Mammary epithelial cell (primary cell): ENCODE measurements at regions of chr1 and their contacts with region 1.

Region 1: DNA sequence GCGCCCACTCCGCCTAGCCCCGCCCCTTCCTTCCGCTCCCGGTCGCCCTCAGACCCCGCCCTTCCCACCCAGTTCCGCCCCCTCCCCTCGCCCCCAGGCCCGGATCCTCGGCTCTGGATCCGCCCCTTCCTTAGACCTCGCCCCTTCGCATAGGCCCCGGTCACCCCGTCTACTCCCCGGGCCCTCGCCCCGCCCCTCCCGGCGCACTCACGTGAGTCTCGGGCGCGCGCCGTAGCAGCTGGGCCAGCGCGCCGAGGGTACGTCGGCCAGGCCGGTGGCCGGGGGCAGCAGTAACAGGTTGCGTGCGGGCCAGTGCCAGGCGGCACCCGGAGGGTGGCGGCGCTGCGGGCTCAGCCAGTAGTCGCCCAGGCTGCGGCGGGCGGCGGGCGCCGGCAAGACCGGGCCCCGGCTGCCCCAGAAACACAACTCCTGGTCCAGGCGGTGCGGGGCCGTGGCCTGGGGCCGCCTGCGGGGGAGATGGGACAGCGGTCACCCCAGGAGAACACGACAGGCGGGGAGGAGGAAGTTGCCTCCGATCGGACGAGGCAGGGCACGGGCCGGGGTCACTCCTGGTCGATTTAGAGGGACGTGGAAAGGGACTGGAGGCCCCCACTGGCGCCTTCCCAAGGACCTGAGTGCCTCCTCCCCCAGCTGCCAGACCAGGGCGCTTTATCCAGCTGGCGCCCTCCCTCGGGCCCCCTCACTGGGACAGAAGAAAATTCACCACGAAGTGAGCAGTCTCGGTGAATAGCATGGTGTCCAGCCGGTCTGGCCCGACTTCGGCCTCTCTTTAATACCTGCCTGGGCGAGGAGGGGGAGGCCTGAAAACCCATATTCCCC is 10.7 kb downstream of the FAM229A start:
- DNase-seq: peak; percentile 73
- H3K4me3 ChIP-seq: peak overlapping the region; percentile 45 to 78 (median 58)
- H3K27ac ChIP-seq: peak overlapping the region; percentile 22
- H3K4me1 ChIP-seq: peaks cover 20% of the 10 kb centered on the region
- H3K27me3 ChIP-seq: no peaks in the 10 kb centered on the region
- CTCF ChIP-seq: no peak

Region 2: GRCh38 chr1:32063261-32063681 is 288.3 kb before region 1 on chr1:
- CTCF ChIA-PET with region 1: no interaction called
- dilution Hi-C with region 1: no loop called
- in situ Hi-C with region 1: no loop called
- intact Hi-C with region 1: no loop called
- DNase-seq: peak; percentile 38
- H3K4me3 ChIP-seq: no peak overlapping the region
- H3K27ac ChIP-seq: no peak overlapping the region
- H3K4me1 ChIP-seq: peaks cover 23% of the 10 kb centered on the region
- H3K27me3 ChIP-seq: no peaks in the 10 kb centered on the region
- CTCF ChIP-seq: peak; percentile 54 to 59

Region 3: DNA sequence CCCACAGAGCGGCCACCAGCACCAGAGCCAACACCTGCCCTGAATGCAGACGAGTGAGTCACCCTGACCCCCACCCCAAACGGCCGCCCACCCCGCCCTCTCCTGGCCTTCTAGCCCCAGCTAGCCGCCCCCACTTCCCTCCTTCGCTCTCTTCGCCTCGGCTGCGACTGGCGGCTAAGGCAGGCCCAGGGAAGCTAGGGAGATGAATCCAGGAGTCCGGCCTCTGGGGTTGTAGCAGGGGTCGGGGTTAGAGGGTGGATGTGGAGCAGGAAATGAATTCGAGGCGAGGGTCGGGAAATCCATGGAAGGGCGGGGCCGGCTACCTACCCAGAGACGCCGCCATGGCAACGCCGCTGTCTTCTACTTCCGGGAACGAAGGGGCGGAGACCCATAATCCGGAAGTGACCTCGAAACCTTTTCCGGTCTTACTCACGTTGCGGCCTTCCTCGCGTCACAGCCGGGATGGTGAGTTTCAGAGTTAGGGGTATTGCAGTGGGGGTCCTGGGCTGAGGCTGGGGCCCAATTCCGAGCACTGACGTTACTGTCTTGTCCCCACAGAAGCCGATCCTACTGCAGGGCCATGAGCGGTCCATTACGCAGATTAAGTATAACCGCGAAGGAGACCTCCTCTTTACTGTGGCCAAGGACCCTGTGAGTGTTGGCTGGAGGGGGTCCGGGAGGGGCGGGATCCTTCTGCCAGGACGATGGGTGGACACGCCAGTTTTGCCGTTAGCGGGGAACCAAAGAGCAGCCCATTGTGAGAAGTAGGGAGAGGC is 129.5 kb before region 1 on chr1 and contains the starts of genes EIF3I and TMEM234:
- CTCF ChIA-PET with region 1: no interaction called
- dilution Hi-C with region 1: no loop called
- in situ Hi-C with region 1: no loop called
- intact Hi-C with region 1: loop called (anchors 5 kb)
- DNase-seq: peak; percentile 86
- H3K4me3 ChIP-seq: peak within 1 kb of the TSS; percentile 52 to 69 (median 64)
- H3K27ac ChIP-seq: peak within 1 kb of the TSS; percentile 95
- H3K4me1 ChIP-seq: peaks cover 11% of the 10 kb centered on the region
- H3K27me3 ChIP-seq: no peaks in the 10 kb centered on the region
- CTCF ChIP-seq: no peak
- total RNA-seq, gene EIF3I: 230 to 277 TPM
- total RNA-seq, gene TMEM234: 18.2 to 24.4 TPM

Region 4: DNA sequence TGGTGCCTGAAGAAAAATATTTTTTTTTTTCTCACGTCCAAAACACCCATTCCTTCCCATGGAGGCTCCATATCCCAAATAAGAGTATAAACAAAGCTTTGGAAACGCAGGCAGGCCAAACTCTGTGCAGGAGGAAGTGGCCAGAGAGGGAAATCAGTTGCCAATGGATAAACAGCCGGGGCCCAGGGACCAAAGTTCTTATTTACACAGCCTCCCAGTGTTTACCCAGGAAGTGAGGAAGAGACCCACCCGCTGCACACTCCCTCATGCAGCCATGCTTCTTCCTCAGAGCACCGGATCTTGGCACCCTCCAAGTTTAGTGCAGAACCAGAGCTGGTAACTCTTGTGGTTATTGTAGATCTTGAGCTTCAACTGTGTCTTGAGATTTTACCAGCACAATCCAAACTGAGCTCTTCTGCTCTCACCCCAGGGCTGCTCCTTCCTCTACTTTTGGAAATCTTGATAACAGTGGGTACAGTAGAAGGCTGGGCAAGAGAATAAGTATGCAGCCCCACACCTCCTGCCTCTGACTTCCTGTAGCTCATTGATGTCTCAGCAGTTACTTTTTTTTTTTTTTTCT is 29.8 kb before region 1 on chr1:
- CTCF ChIA-PET with region 1: no interaction called
- dilution Hi-C with region 1: no loop called
- in situ Hi-C with region 1: no loop called
- intact Hi-C with region 1: no loop called
- DNase-seq: no peak
- H3K4me3 ChIP-seq: no peak overlapping the region
- H3K27ac ChIP-seq: no peak overlapping the region
- H3K4me1 ChIP-seq: no peaks in the 10 kb centered on the region
- H3K27me3 ChIP-seq: no peaks in the 10 kb centered on the region
- CTCF ChIP-seq: no peak

Region 5: GRCh38 chr1:32335790-32336590 is 15.6 kb before region 1 on chr1 and contains the start of gene MARCKSL1:
- CTCF ChIA-PET with region 1: no interaction called
- dilution Hi-C with region 1: no loop called
- in situ Hi-C with region 1: no loop called
- intact Hi-C with region 1: loop called (anchors 1 kb)
- DNase-seq: peak; percentile 34
- H3K4me3 ChIP-seq: peak within 1 kb of the TSS; percentile 1 to 54 (median 50)
- H3K27ac ChIP-seq: no peak within 1 kb of the TSS
- H3K4me1 ChIP-seq: peaks cover 49% of the 10 kb centered on the region
- H3K27me3 ChIP-seq: no peaks in the 10 kb centered on the region
- CTCF ChIP-seq: no peak
- total RNA-seq, gene MARCKSL1: 13.0 to 16.1 TPM